A549 (cell line): ENCODE measurements at regions of chr7 and their contacts with region 1.

Region 1: GRCh38 chr7:131859147-131859821 is 302.9 kb upstream of the PODXL start:
- DNase-seq: peak; percentile 77 to 87
- ATAC-seq: peak; percentile 86 to 97
- H3K4me3 ChIP-seq: no peak overlapping the region
- H3K27ac ChIP-seq: no peak overlapping the region
- H3K4me1 ChIP-seq: peaks cover 21% of the 10 kb centered on the region
- CTCF ChIP-seq: peak; percentile 84
- EP300 ChIP-seq: no peak
- POLR2A ChIP-seq: no peak
- RAD21 ChIP-seq: peak; percentile 81 to 85

Region 2: DNA sequence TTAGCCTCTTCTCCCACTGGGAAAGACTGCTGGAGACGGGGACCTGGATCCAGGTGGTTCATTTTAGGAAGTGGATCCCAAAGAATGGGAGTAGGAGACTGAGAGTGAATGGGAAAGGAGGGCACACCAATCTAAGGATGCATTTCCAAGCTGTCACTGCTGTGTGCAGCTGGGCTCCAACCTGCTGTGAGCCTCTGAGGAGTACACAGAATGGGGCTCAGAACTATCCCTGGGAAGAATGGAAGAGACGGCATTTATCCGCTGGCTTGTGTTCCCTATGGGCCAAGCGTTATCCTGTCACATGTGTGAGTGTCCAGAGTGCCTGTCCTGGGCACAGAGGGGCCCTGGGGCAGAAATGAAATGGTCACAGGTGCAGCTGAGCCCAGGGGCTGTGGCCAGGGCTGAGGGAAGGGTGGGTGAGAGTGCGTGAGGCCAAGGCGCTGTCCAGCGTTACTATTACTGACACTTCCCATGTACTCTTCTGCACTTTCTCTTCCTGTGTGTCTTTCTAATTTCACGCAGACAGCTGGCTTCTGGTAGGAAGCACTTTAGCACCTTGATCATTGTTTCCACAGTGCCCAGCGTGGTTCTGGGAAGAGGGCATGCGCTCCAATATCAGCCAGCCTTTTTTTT is 267.5 kb before region 1 on chr7:
- CTCF ChIA-PET with region 1: no interaction called
- POLR2A ChIA-PET with region 1: no interaction called
- DNase-seq: no peak
- ATAC-seq: peak; percentile 50 to 57; a peak in 4 of 6 replicates
- H3K4me3 ChIP-seq: no peak overlapping the region
- H3K27ac ChIP-seq: no peak overlapping the region
- H3K4me1 ChIP-seq: no peaks in the 10 kb centered on the region
- CTCF ChIP-seq: no peak
- EP300 ChIP-seq: no peak
- POLR2A ChIP-seq: no peak
- RAD21 ChIP-seq: no peak

Region 3: DNA sequence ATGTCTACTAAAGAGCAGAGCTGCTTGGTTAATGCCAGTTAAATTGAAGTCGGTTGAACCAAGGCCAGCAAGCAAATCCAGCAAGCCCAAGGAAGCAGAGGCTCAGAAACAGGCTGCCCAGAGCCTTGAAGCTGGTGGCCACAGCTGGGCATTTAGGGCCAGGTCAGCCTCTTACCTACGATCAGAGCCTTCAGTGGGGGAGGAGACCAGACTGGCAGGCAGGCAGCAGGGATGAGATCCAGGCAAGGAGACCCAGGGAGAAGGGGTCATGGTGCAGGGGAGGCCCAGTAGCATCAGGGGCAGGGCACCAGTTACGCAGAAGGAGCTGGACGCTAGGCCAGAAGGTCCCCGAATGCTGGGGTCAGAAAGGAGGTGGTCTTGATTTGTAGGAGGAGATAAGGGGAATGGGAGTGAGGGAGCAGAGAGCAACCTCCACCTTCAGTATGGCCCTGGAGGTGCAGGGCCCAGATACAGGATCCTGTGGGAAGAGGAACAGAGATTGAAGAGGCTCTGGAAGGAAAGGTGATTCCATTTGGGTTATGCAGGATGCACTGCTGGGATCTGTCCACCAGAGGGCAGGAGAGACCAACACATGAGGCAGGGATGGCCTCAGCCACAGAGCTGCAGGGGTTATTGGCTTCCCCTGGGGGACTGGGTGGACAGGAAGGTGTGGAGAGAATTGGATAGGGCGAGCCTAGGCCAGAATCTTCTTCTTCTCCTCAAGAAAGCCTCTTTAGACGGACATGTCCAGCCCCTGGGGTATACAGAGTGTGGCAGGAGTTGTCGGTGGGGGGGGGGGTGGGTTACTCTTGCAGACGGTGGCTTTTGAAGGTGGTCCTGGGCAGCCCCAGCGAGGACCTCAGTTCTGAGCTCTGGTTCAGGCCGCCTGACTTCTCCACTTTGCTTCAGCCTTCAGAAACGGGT is 170.3 kb before region 1 on chr7:
- CTCF ChIA-PET with region 1: interaction called, 28 read pairs
- POLR2A ChIA-PET with region 1: no interaction called
- DNase-seq: peak; percentile 57 to 94
- ATAC-seq: peak; percentile 73 to 84
- H3K4me3 ChIP-seq: no peak overlapping the region
- H3K27ac ChIP-seq: no peak overlapping the region
- H3K4me1 ChIP-seq: no peaks in the 10 kb centered on the region
- CTCF ChIP-seq: peak; percentile 92
- EP300 ChIP-seq: no peak
- POLR2A ChIP-seq: no peak
- RAD21 ChIP-seq: peak; percentile 94 to 97

Region 4: GRCh38 chr7:131723926-131724325 is 135.4 kb before region 1 on chr7:
- CTCF ChIA-PET with region 1: no interaction called
- POLR2A ChIA-PET with region 1: no interaction called
- DNase-seq: peak; percentile 15 to 27
- ATAC-seq: peak; percentile 65 to 93; a peak in 5 of 6 replicates
- H3K4me3 ChIP-seq: no peak overlapping the region
- H3K27ac ChIP-seq: peak overlapping the region in 1 of 2 experiments; percentile 50; a peak in 2 of 6 replicates
- H3K4me1 ChIP-seq: peaks cover 14% of the 10 kb centered on the region
- CTCF ChIP-seq: no peak
- EP300 ChIP-seq: no peak
- POLR2A ChIP-seq: no peak
- RAD21 ChIP-seq: no peak

Region 5: DNA sequence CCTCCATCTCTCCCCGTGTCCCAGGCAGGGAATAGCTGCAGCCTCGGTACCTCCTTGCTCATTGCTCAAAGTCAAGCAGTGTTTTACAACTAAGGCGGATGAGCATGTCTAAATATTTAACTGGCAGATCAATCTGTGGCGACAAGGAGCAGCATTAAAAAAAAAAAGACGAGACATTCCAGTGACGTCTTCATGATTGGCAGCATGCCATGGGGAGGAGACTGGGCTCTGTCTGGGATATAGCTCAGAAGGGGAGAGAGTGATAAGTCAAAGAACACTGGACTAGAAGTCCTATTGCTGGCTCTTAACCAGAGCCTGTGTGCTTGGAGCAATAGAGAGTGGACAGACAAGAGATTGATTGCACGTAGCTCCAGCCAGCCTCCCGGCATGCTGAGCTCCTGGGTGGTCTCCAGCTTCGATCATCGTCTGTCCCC is 15.4 kb before region 1 on chr7:
- CTCF ChIA-PET with region 1: interaction called, 44 read pairs
- POLR2A ChIA-PET with region 1: no interaction called
- DNase-seq: peak in 1 of 2 experiments; percentile 60
- ATAC-seq: peak; percentile 81 to 82
- H3K4me3 ChIP-seq: no peak overlapping the region
- H3K27ac ChIP-seq: 0 out of 6 replicates have a peak overlapping the region, but pooled peaks of 1 of the 2 experiments have one; percentile 22
- H3K4me1 ChIP-seq: peaks cover 17% of the 10 kb centered on the region; the same call in 2 of the 3 replicates
- CTCF ChIP-seq: no peak
- EP300 ChIP-seq: no peak
- POLR2A ChIP-seq: no peak
- RAD21 ChIP-seq: no peak

Region 6: DNA sequence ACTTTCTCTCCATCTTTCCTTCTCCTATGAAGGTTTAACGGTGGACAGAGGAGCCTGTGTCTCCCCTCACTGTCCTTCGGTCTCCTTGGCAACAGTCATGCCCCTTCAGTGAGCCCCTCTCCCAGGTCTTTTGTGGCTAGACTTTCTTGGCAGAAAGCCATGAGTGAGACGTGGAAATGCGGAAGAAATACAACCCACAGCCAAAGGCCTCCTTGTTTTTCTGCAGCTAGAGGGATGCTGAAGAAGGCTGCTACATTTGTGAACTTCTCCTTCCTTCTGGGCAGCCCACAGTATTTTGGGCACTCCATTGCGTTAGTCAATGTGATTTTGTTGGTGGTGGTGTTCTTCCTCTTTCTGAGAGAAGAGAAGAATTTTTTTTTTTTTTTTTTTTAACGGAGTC is 30.9 kb after region 1 on chr7:
- CTCF ChIA-PET with region 1: interaction called, 18 read pairs
- POLR2A ChIA-PET with region 1: no interaction called
- DNase-seq: no peak
- ATAC-seq: no peak
- H3K4me3 ChIP-seq: no peak overlapping the region
- H3K27ac ChIP-seq: no peak overlapping the region
- H3K4me1 ChIP-seq: peaks cover 8% of the 10 kb centered on the region
- CTCF ChIP-seq: no peak
- EP300 ChIP-seq: no peak
- POLR2A ChIP-seq: no peak
- RAD21 ChIP-seq: no peak

Region 7: GRCh38 chr7:131908714-131909113 is 49.4 kb after region 1 on chr7:
- CTCF ChIA-PET with region 1: interaction called, 14 read pairs
- POLR2A ChIA-PET with region 1: no interaction called
- DNase-seq: no peak
- ATAC-seq: no peak
- H3K4me3 ChIP-seq: no peak overlapping the region
- H3K27ac ChIP-seq: no peak overlapping the region
- H3K4me1 ChIP-seq: no peaks in the 10 kb centered on the region
- CTCF ChIP-seq: no peak
- EP300 ChIP-seq: no peak
- POLR2A ChIP-seq: no peak
- RAD21 ChIP-seq: no peak

Region 8: GRCh38 chr7:132249614-132249972 is 390.3 kb after region 1 on chr7:
- CTCF ChIA-PET with region 1: interaction called, 44 read pairs
- POLR2A ChIA-PET with region 1: no interaction called
- DNase-seq: peak; percentile 56 to 59
- ATAC-seq: peak; percentile 86 to 92
- H3K4me3 ChIP-seq: no peak overlapping the region
- H3K27ac ChIP-seq: no peak overlapping the region; a peak in 1 of 6 replicates
- H3K4me1 ChIP-seq: peaks cover 24% of the 10 kb centered on the region
- CTCF ChIP-seq: peak; percentile 48
- EP300 ChIP-seq: no peak
- POLR2A ChIP-seq: no peak
- RAD21 ChIP-seq: peak; percentile 65 to 69